ENCODE measurements at regions of chr1 and their contacts with region 1.

Region 1: DNA sequence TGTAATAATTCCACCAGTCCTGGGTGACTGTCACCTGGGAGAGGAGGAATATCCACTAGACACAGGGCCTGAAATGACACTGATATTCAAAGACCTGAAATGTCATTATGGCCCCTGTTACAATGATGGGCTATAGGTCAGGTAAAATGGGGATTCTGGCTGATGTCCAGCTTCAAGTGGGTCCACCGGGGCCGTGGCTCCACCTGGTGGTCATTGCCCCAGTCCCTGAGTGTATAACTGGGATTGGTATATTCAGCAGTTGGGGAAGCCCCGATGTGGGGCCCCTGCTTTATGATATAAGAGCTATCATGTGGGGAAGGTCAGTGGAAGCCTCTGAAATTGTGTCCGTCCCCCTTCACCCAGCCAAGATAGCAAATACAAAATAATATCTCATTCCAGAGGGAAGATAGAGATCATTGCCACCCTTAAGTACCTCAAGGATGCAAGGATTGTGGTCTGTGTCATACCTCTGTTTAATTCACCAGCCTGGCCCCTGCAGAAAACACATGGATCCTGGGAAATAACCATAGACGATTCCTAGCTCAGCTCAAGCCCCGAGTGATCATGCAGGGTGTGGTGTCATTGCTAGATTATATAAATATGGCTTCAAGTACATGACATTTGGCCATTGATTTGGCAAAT is 19.4 kb downstream of the PLEKHO1 start:
- DNase-seq: peak; percentile 77
- CTCF ChIP-seq: peak; percentile 81

Region 2: GRCh38 chr1:150067184-150068036 is 101.7 kb before region 1 on chr1 and contains the start of gene VPS45:
- CTCF ChIA-PET with region 1: interaction called, 247 read pairs
- POLR2A ChIA-PET with region 1: interaction called, 4 read pairs
- DNase-seq: peak; percentile 88
- CTCF ChIP-seq: no peak

Region 3: DNA sequence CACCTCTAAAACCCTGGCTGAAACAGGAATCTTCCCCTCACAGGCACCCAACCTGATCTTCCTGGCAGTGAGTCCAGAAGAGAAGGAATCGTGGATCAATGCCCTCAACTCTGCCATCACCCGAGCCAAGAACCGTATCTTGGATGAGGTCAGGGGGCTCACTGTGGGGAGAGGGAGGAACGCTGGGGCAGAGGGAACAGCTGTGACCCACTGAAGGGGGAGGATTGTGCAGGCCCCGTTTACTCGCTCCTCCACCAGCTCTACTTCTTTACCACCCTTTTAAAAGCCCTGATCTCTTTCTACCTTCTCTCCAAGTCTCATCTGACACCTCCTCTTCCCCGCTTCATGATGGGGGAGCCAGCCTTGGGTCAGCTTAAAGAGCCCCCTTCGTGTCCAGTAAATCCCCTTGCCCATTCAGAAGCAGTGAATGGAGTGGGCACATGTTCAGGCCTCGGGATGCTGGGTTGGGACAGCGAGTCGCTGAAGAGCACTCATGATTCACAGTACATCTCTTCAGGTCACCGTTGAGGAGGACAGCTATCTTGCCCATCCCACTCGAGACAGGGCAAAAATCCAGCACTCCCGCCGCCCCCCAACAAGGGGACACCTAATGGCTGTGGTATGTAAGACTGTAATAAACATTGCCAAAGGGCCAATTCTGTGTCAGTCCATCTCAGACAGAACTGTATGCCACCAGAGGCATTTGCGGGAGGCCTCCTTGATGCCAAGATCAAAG is 12.0 kb before region 1 on chr1:
- CTCF ChIA-PET with region 1: interaction called, 82 read pairs
- POLR2A ChIA-PET with region 1: no interaction called
- DNase-seq: no peak
- CTCF ChIP-seq: no peak

Region 4: GRCh38 chr1:150235852-150236613 is 67.0 kb after region 1 on chr1 and contains the start of gene ANP32E:
- CTCF ChIA-PET with region 1: no interaction called
- POLR2A ChIA-PET with region 1: no interaction called
- DNase-seq: peak; percentile 97
- CTCF ChIP-seq: no peak